ENCODE measurements at regions of chr3 and their contacts with region 1.

Region 1: DNA sequence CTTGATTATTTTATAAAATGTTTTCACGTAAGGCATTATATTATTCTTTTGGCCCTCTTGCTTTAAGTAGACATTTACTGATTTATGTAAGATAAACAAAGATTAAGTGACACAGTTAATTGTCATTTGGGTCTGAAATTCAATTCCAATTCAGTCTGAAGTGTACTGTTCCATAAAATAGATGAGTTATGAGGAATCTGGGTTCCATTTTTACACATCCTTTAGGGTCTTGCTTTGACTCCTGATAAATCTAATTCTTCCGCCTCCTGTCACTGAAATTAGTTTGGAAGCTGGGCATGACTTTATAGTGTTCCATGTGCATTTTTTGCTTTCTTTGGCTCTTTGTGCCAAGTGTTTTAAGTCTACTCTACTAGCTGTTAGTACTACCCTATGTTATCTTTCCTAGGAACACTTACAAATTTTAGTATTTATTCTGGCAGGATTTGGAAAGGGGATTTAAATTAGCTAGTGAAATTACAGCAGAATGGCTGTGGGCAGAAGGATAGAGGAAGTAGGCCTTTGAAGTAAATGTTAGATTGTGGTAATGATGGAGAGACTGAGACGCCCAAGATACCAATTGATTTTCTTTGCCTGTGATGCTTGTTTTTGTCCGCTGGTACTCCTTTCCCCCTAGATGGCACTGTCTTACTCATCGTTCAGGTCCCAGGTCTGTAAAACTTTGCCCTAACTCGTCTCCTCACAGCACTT is 14.3 kb downstream of the ARL8B start:
- DNase-seq: peak in 9 of 14 experiments; percentile 5 to 81 (median 25)
- ATAC-seq: peak; percentile 94
- H3K4me3 ChIP-seq: no peak overlapping the region
- H3K4me3 Mint-ChIP-seq: no peak overlapping the region
- H3K27ac ChIP-seq: peak overlapping the region in 1 of 2 donors; percentile 41
- H3K27ac Mint-ChIP-seq: peak overlapping the region; percentile 52
- H3K4me1 ChIP-seq: peaks cover 30% of the 10 kb centered on the region
- H3K4me1 Mint-ChIP-seq: peaks cover 81% of the 10 kb centered on the region
- H3K27me3 ChIP-seq: no peaks in the 10 kb centered on the region
- H3K27me3 Mint-ChIP-seq: no peaks in the 10 kb centered on the region
- CTCF ChIP-seq: peak; percentile 73

Region 2: GRCh38 chr3:5095879-5096278 is 40.5 kb before region 1 on chr3:
- CTCF ChIA-PET with region 1: no interaction called
- POLR2A ChIA-PET with region 1: no interaction called
- intact Hi-C with region 1: no loop called
- DNase-seq: peak in 2 of 14 experiments; percentile 7 to 14
- ATAC-seq: no peak
- H3K4me3 ChIP-seq: no peak overlapping the region
- H3K4me3 Mint-ChIP-seq: no peak overlapping the region
- H3K27ac ChIP-seq: no peak overlapping the region
- H3K27ac Mint-ChIP-seq: no peak overlapping the region
- H3K4me1 ChIP-seq: peaks cover 3% of the 10 kb centered on the region
- H3K4me1 Mint-ChIP-seq: no peaks in the 10 kb centered on the region
- H3K27me3 ChIP-seq: peaks cover 10 to 17% of the 10 kb centered on the region in 2 experiments
- H3K27me3 Mint-ChIP-seq: peaks cover 50% of the 10 kb centered on the region
- CTCF ChIP-seq: no peak

Region 3: DNA sequence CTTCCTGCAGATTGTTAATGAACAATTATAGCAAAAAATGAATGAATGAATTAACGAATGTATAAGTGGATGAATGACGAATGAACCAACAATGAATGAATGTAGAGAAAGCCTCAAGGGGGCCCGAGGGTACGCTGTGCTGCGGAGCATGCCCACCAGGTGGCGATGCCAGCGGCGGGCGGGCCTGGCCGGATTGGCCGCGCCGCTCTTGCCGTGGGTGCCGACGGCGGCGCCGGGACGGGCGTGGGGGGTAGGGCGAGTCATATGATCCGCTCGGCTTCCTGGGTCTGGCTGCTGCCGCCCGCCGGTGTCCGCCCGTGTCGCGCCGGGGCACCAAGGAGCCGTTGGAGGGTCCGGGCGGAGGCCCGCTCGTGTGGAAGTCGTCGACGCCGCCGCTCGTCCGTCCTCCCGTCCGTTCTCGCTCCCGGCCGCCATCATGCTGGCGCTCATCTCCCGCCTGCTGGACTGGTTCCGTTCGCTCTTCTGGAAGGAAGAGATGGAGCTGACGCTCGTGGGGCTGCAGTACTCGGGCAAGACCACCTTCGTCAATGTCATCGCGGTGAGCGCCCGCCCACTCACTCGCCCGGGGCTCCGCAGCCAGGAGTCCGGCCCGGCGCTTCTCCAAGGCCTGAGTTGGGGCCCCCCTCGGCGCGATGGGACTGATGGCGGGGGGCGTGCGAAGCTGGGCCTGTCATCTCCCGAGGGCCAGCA is 14.2 kb before region 1 on chr3 and contains the start of gene ARL8B:
- CTCF ChIA-PET with region 1: interaction called, 10 read pairs
- POLR2A ChIA-PET with region 1: no interaction called
- intact Hi-C with region 1: no loop called
- DNase-seq: peak; percentile 83 to 94 (median 90)
- ATAC-seq: peak; percentile 99
- H3K4me3 ChIP-seq: peak within 1 kb of the TSS; percentile 94
- H3K4me3 Mint-ChIP-seq: peak within 1 kb of the TSS; percentile 87
- H3K27ac ChIP-seq: peak within 1 kb of the TSS; percentile 79 to 86
- H3K27ac Mint-ChIP-seq: peak within 1 kb of the TSS; percentile 87
- H3K4me1 ChIP-seq: peaks cover 36% of the 10 kb centered on the region
- H3K4me1 Mint-ChIP-seq: peaks cover 50% of the 10 kb centered on the region
- H3K27me3 ChIP-seq: no peaks in the 10 kb centered on the region
- H3K27me3 Mint-ChIP-seq: no peaks in the 10 kb centered on the region
- CTCF ChIP-seq: peak; percentile 97
- total RNA-seq, gene ARL8B: 48.5 to 49.7 TPM

Region 4: GRCh38 chr3:5194341-5195159 is 58.2 kb after region 1 on chr3:
- CTCF ChIA-PET with region 1: interaction called, 3 read pairs
- POLR2A ChIA-PET with region 1: interaction called, 12 read pairs
- intact Hi-C with region 1: loop called in 1 of 2 experiments (anchors 5 kb)
- DNase-seq: peak in 8 of 14 experiments; percentile 18 to 85 (median 39)
- ATAC-seq: peak; percentile 56
- H3K4me3 ChIP-seq: no peak overlapping the region
- H3K4me3 Mint-ChIP-seq: peak overlapping the region; percentile 22
- H3K27ac ChIP-seq: peak overlapping the region; percentile 48 to 71
- H3K27ac Mint-ChIP-seq: peak overlapping the region; percentile 87
- H3K4me1 ChIP-seq: peaks cover 75% of the 10 kb centered on the region
- H3K4me1 Mint-ChIP-seq: peaks cover 86% of the 10 kb centered on the region
- H3K27me3 ChIP-seq: no peaks in the 10 kb centered on the region
- H3K27me3 Mint-ChIP-seq: no peaks in the 10 kb centered on the region
- CTCF ChIP-seq: no peak

Region 5: GRCh38 chr3:5220193-5220592 is 83.8 kb after region 1 on chr3:
- CTCF ChIA-PET with region 1: interaction called, 3 read pairs
- POLR2A ChIA-PET with region 1: no interaction called
- intact Hi-C with region 1: loop called in 1 of 2 experiments (anchors 5 kb)
- DNase-seq: no peak
- ATAC-seq: no peak
- H3K4me3 ChIP-seq: no peak overlapping the region
- H3K4me3 Mint-ChIP-seq: no peak overlapping the region
- H3K27ac ChIP-seq: no peak overlapping the region
- H3K27ac Mint-ChIP-seq: peak overlapping the region; percentile 18
- H3K4me1 ChIP-seq: no peaks in the 10 kb centered on the region
- H3K4me1 Mint-ChIP-seq: peaks cover 6% of the 10 kb centered on the region
- H3K27me3 ChIP-seq: no peaks in the 10 kb centered on the region
- H3K27me3 Mint-ChIP-seq: no peaks in the 10 kb centered on the region
- CTCF ChIP-seq: no peak

Region 6: GRCh38 chr3:5426094-5426883 is 289.9 kb after region 1 on chr3:
- CTCF ChIA-PET with region 1: no interaction called
- POLR2A ChIA-PET with region 1: no interaction called
- intact Hi-C with region 1: loop called in 1 of 2 experiments (anchors 10 kb)
- DNase-seq: peak; percentile 18 to 69 (median 40)
- ATAC-seq: peak; percentile 56
- H3K4me3 ChIP-seq: no peak overlapping the region
- H3K4me3 Mint-ChIP-seq: no peak overlapping the region
- H3K27ac ChIP-seq: no peak overlapping the region
- H3K27ac Mint-ChIP-seq: no peak overlapping the region
- H3K4me1 ChIP-seq: peaks cover 5% of the 10 kb centered on the region
- H3K4me1 Mint-ChIP-seq: no peaks in the 10 kb centered on the region
- H3K27me3 ChIP-seq: no peaks in the 10 kb centered on the region
- H3K27me3 Mint-ChIP-seq: peaks cover 6% of the 10 kb centered on the region
- CTCF ChIP-seq: peak; percentile 66